Sciatic nerve (tissue), 2 donors: ENCODE measurements at regions of chr10 and their contacts with region 1.

Region 1: GRCh38 chr10:67779465-67780203 is 58.4 kb downstream of the DNAJC12 start:
- DNase-seq: peak; percentile 73
- ATAC-seq: peak; percentile 91

Region 2: DNA sequence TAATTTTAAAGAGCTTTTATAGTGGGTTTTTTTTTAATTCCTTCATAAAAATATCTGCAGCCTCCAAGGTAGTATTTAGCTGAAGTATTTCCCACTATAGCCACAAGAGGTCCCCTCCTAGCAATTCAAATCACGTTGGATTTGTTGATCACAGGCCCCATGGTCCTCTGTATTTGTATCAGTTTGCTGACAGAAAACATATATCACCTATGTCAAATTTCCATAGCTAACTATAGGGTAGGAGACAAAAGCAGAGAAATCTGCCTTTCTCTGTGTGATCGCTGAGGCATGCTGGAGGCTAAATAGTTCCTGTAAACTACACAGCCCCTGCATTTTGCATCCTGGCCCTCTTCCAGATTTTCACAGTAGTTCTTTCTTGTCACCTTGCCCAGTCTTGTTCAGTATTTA is 81.9 kb before region 1 on chr10:
- intact Hi-C with region 1: loop called (anchors 5 kb)
- DNase-seq: no peak
- ATAC-seq: peak; percentile 73